Activated naive CD4-positive, alpha-beta T cell treated with anti-CD3 and anti-CD28 coated beads for 36 hours (primary cell): ENCODE measurements at regions of chrX and their contacts with region 1.

Region 1: GRCh38 chrX:56995271-56995994 is at the start of gene SPIN3:
- DNase-seq: peak; percentile 67
- H3K4me3 Mint-ChIP-seq: peak within 1 kb of the TSS; percentile 86
- H3K27ac Mint-ChIP-seq: peak within 1 kb of the TSS; percentile 92
- H3K4me1 Mint-ChIP-seq: peaks cover 37% of the 10 kb centered on the region
- H3K27me3 Mint-ChIP-seq: no peaks in the 10 kb centered on the region
- total RNA-seq, gene SPIN3: 8.6 to 10.3 TPM

Region 2: GRCh38 chrX:56968980-56969379 is 26.5 kb before region 1 on chrX:
- CTCF ChIA-PET with region 1: no interaction called
- intact Hi-C with region 1: no loop called
- DNase-seq: no peak
- H3K4me3 Mint-ChIP-seq: no peak overlapping the region
- H3K27ac Mint-ChIP-seq: no peak overlapping the region
- H3K4me1 Mint-ChIP-seq: peaks cover 6% of the 10 kb centered on the region
- H3K27me3 Mint-ChIP-seq: no peaks in the 10 kb centered on the region

Region 3: GRCh38 chrX:57121162-57121741 is 125.8 kb after region 1 on chrX and contains the start of gene SPIN2B:
- CTCF ChIA-PET with region 1: no interaction called
- intact Hi-C with region 1: loop called (anchors 1 kb)
- DNase-seq: peak; percentile 86
- H3K4me3 Mint-ChIP-seq: peak within 1 kb of the TSS; percentile 89
- H3K27ac Mint-ChIP-seq: peak within 1 kb of the TSS; percentile 88
- H3K4me1 Mint-ChIP-seq: peaks cover 10% of the 10 kb centered on the region
- H3K27me3 Mint-ChIP-seq: no peaks in the 10 kb centered on the region
- total RNA-seq, gene SPIN2B: 6.8 to 8.2 TPM

Region 4: GRCh38 chrX:57587607-57588006 is 592.2 kb after region 1 on chrX:
- CTCF ChIA-PET with region 1: no interaction called
- intact Hi-C with region 1: loop called (anchors 5 kb)
- DNase-seq: no peak
- H3K4me3 Mint-ChIP-seq: no peak overlapping the region
- H3K27ac Mint-ChIP-seq: no peak overlapping the region
- H3K4me1 Mint-ChIP-seq: peaks cover 6% of the 10 kb centered on the region
- H3K27me3 Mint-ChIP-seq: no peaks in the 10 kb centered on the region